Activated B cell treated with CpG ODN at 0.5 μM for 24 hours (primary cell): ENCODE measurements at regions of chr6 and their contacts with region 1.

Region 1: DNA sequence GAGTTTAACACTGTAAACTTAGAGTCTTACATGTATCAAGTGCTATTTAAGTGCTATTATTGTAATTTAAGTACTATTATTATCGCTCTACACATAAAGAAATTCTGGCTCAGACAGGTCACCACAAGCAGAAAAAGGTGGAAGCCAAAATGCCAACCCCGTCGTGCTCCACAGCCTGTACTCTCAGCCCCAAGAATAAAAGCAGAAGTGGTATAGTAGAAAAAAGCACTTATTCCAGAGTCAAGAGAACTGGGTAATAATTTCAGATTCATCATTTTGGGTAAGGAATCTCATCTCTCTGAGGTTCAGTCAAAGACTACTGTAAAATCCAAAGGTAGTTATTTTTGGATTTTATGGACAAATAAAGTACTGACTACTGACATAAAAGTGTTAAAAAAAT is 943 bp downstream of the ZUP1 start:
- DNase-seq: no peak
- ATAC-seq: peak; percentile 62
- H3K4me3 Mint-ChIP-seq: peak overlapping the region; percentile 100
- H3K27ac Mint-ChIP-seq: peak overlapping the region; percentile 99
- H3K4me1 Mint-ChIP-seq: peaks cover 41% of the 10 kb centered on the region
- H3K27me3 Mint-ChIP-seq: peaks cover 8% of the 10 kb centered on the region
- CTCF ChIP-seq: no peak

Region 2: GRCh38 chr6:115932481-115932880 is 735.1 kb before region 1 on chr6:
- CTCF ChIA-PET with region 1: no interaction called
- POLR2A ChIA-PET with region 1: no interaction called
- intact Hi-C with region 1: no loop called
- DNase-seq: no peak
- ATAC-seq: no peak
- H3K4me3 Mint-ChIP-seq: no peak overlapping the region
- H3K27ac Mint-ChIP-seq: no peak overlapping the region
- H3K4me1 Mint-ChIP-seq: no peaks in the 10 kb centered on the region
- H3K27me3 Mint-ChIP-seq: no peaks in the 10 kb centered on the region
- CTCF ChIP-seq: no peak

Region 3: GRCh38 chr6:116253505-116254296 is 413.9 kb before region 1 on chr6 and contains the start of gene TSPYL4:
- CTCF ChIA-PET with region 1: no interaction called
- POLR2A ChIA-PET with region 1: no interaction called
- intact Hi-C with region 1: loop called (anchors 1 kb)
- DNase-seq: peak; percentile 80
- ATAC-seq: peak; percentile 98
- H3K4me3 Mint-ChIP-seq: no peak within 1 kb of the TSS
- H3K27ac Mint-ChIP-seq: no peak within 1 kb of the TSS
- H3K4me1 Mint-ChIP-seq: peaks cover 1% of the 10 kb centered on the region
- H3K27me3 Mint-ChIP-seq: no peaks in the 10 kb centered on the region
- CTCF ChIP-seq: no peak
- total RNA-seq, gene TSPYL4: 16.0 and 16.7 TPM in 2 replicates

Region 4: DNA sequence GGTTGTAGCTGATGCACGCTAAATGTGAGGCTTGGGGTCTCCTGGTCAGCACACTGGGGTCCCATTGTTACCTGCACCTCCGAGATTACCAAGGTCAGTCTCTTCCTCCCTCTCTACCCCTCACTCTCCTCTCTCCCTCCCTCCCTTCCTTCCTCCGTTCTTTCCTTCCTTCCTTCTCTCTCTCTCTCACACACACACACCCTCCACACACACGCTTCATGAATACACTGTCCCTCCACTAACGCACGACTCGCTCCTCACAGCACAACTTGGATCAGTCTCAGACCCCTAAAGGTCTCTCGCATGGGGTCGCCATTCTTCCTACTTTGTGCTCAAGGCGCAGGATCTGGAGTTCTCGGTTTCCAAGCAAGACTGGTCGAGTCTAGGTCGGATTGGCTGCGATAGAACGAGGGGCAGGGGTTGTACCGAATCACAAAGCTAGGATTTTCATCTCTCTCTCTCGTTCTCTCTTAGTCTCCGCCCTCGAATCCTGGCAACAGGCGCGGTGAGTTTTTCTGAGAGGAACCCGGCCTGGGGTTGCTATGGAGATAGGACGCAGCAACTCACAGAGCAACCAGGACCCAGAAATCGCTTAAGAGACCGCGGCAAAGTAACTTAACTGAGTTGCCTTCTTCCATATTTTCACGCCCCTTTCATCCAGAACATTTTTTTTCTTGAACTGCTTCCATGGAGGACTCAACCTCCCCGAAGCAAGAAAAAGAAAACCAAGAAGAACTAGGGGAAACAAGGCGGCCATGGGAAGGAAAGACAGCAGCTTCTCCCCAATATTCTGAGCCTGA is 51.5 kb before region 1 on chr6 and contains the start of gene RSPH4A:
- CTCF ChIA-PET with region 1: no interaction called
- POLR2A ChIA-PET with region 1: no interaction called
- intact Hi-C with region 1: loop called (anchors 1 kb)
- DNase-seq: peak; percentile 34
- ATAC-seq: peak; percentile 95
- H3K4me3 Mint-ChIP-seq: peak within 1 kb of the TSS; percentile 84
- H3K27ac Mint-ChIP-seq: peak within 1 kb of the TSS; percentile 8
- H3K4me1 Mint-ChIP-seq: peaks cover 18% of the 10 kb centered on the region
- H3K27me3 Mint-ChIP-seq: peaks cover under 1% of the 10 kb centered on the region
- CTCF ChIP-seq: no peak
- total RNA-seq, gene RSPH4A: 0.39 and 0.40 TPM in 2 replicates

Region 5: GRCh38 chr6:116695401-116695800 is 27.8 kb after region 1 on chr6:
- CTCF ChIA-PET with region 1: no interaction called
- POLR2A ChIA-PET with region 1: no interaction called
- intact Hi-C with region 1: loop called (anchors 1 kb)
- DNase-seq: no peak
- ATAC-seq: peak; percentile 85
- H3K4me3 Mint-ChIP-seq: no peak overlapping the region
- H3K27ac Mint-ChIP-seq: no peak overlapping the region
- H3K4me1 Mint-ChIP-seq: peaks cover 29% of the 10 kb centered on the region
- H3K27me3 Mint-ChIP-seq: no peaks in the 10 kb centered on the region
- CTCF ChIP-seq: no peak